Endothelial cell of umbilical vein (primary cell): ENCODE measurements at regions of chr17 and their contacts with region 1.

Region 1: GRCh38 chr17:29640413-29640812 is 17.7 kb upstream of the CORO6 start:
- DNase-seq: peak; percentile 90
- H3K4me3 ChIP-seq: no peak overlapping the region
- H3K27ac ChIP-seq: peak overlapping the region; percentile 79
- H3K4me1 ChIP-seq: peaks cover 58% of the 10 kb centered on the region
- H3K27me3 ChIP-seq: no peaks in the 10 kb centered on the region
- CTCF ChIP-seq: no peak
- POLR2A ChIP-seq: no peak

Region 2: GRCh38 chr17:29533976-29534375 is 106.4 kb before region 1 on chr17:
- CTCF ChIA-PET with region 1: no interaction called
- POLR2A ChIA-PET with region 1: no interaction called
- dilution Hi-C with region 1: no loop called
- intact Hi-C with region 1: no loop called
- DNase-seq: no peak
- H3K4me3 ChIP-seq: no peak overlapping the region
- H3K27ac ChIP-seq: no peak overlapping the region
- H3K4me1 ChIP-seq: no peaks in the 10 kb centered on the region
- H3K27me3 ChIP-seq: no peaks in the 10 kb centered on the region
- CTCF ChIP-seq: no peak
- POLR2A ChIP-seq: no peak

Region 3: DNA sequence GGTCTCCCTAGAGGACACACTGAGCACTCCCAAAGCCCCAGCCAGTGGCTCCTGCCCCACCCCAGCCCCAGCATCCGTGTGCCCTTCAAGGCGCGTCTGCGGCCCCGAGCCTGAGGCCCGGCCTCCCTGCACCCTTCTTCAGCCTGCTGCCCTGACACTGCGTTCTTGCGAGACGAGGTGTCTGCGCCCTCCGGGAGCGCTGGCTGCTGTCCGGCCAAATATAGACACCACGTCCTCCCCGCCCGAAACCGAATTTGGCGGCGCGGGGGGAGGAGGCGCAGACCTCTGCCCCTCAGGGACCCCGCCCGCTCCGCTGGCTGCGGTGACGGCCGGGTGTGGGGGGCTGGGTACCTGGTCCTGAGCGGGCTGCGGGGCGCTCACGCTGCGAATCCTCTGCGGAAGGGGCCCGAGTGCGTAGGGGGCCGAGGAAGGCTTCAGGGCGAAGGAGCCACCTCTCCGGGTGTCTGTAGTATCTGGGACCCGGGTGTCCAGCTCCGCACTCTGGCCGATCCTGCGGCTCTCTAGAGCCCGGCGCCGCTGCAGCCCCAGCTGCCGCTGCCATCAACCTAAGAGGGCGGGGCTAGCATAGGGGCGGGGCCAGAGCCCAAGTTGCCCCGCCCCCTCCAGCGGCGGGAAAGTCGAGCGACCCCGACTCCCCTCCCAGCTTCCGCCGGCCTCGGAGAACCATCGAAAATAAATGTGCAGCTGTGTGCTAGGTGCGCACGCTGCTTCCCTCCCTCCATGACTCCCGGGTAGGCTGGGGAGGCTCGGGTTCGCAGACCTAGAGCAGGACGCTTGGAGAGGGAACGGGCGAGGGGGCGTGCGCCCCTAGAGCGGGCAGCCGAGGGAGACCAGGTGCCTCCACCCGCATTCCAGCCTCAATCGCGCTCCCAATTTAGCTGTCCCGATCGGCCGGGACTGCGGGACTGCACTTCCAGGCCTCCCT is 17.8 kb before region 1 on chr17 and contains the start of gene CORO6:
- CTCF ChIA-PET with region 1: interaction called, 92 read pairs
- POLR2A ChIA-PET with region 1: no interaction called
- dilution Hi-C with region 1: no loop called
- intact Hi-C with region 1: loop called (anchors 1 kb)
- DNase-seq: peak; percentile 50
- H3K4me3 ChIP-seq: peak within 1 kb of the TSS; percentile 31 to 73 (median 71)
- H3K27ac ChIP-seq: no peak within 1 kb of the TSS
- H3K4me1 ChIP-seq: peaks cover 11% of the 10 kb centered on the region
- H3K27me3 ChIP-seq: no peaks in the 10 kb centered on the region
- CTCF ChIP-seq: no peak
- POLR2A ChIP-seq: no peak
- total RNA-seq, gene CORO6: 7.8 and 10.7 TPM in 2 replicates

Region 4: DNA sequence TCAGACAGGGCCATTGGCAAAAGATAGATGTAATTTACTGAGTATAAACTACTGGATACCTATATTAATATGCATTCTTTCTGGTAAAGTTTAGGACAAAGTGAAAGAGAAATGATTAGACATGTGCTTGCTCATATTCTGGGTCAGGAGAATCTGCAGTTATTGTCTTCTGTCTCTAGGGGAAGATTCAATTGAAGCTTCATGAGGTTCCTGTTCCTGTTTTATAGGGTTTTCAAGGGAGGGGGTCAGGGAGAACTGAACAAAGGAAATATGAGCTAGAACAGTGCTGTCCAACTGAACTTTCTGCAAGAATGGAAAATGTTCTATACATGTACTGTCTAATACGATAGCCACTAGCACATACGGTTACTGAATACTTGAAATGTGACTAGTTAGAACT is 41.6 kb after region 1 on chr17:
- CTCF ChIA-PET with region 1: interaction called, 22 read pairs
- POLR2A ChIA-PET with region 1: no interaction called
- dilution Hi-C with region 1: no loop called
- intact Hi-C with region 1: loop called (anchors 1 kb)
- DNase-seq: peak; percentile 41
- H3K4me3 ChIP-seq: no peak overlapping the region
- H3K27ac ChIP-seq: peak overlapping the region; percentile 91
- H3K4me1 ChIP-seq: peaks cover 33% of the 10 kb centered on the region
- H3K27me3 ChIP-seq: no peaks in the 10 kb centered on the region
- CTCF ChIP-seq: no peak
- POLR2A ChIP-seq: no peak

Region 5: DNA sequence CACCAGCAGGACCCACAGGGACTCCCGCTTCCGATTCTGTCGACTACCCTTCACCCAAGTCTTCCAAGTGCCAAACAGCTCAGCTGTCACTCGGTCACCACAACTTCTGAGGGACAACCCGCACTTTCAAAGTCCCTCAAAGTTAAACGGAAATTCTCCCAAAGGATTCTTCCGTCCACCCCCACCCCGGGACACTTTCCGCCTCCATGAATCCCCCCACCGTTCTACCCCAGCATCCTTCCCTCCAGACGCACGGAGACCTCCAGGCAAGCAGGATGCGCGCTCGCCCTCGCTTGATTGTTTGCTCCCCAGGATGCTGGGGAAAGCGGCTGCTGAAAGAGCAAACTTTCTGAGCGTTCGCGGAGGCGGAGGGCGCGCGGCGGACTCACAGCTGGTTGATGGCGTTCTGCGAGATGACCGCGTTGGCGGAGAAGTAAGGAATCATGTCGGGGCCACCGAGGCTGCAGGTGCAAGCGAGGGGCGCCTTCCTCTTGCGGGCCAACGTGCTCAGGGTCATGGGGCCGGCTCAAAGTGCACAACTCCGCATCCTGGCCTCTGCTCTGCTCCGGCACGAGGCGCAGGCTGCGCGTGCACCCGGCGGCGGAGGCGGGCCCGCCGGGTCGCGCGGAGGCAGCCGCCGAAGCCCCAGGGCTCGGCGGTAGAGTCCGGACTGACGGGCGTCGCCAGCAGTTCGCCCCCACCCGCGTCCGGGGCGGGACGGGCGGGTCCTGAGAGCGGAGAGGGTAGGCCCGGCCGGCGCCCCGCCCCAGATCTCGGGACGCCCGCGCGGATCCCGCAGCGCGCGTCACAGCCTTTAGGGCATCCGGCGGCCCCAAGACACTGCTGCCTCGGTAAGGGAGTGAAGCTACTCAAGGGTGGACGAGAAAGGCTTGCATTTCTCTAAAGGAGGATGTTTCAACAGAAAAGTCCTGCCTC is 120.6 kb after region 1 on chr17:
- CTCF ChIA-PET with region 1: interaction called, 27 read pairs
- POLR2A ChIA-PET with region 1: interaction called, 5 read pairs
- dilution Hi-C with region 1: no loop called
- intact Hi-C with region 1: loop called (anchors 1 kb)
- DNase-seq: peak; percentile 89
- H3K4me3 ChIP-seq: peak overlapping the region; percentile 56 to 93 (median 89)
- H3K27ac ChIP-seq: peak overlapping the region; percentile 84
- H3K4me1 ChIP-seq: peaks cover 11% of the 10 kb centered on the region
- H3K27me3 ChIP-seq: no peaks in the 10 kb centered on the region
- CTCF ChIP-seq: no peak
- POLR2A ChIP-seq: peak; percentile 90

Region 6: DNA sequence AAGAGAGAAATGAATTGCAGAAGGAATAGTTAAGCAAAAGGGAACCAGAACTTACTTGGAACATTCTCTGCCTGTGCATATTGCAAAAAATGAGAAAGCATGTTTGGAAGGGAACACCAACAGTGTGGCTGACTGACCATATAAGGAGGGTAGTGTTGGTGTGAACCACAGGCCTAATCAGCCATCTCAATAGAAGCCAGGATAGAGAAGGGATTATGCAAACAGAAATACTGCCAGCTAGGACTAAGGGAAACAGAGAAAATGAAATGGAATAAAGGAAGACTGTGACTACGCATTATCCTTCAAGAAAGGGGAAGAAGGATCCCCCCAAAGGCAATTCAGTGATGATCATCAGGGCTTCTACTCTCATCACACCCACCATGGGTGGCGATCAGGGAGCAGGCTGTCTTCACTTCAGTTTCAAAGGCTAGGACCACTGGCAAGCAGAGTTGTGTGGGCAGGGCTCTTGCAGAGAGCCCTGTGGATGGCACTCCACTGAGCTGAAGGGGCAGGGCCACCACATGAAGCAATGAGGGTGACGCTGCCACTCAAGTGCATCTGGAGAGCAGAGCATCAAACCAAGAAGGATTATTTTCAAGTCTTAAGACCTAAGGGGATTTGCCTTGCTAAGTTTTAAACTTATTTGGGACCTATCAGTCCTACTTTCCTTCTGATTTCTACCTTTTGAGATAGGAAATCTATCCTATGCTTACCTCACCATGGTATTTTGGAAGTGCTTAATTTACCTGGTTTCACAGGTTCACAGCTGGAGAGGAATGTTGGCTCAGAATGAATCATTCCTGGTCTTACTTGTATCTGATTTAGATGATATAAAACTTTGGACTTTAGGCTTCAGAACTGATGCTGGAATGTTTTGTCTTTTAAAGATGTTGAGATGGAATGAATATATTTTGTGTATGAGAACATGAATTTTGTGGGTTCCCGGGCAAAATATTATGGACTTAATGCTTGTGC is 149.1 kb after region 1 on chr17:
- CTCF ChIA-PET with region 1: interaction called, 12 read pairs
- POLR2A ChIA-PET with region 1: no interaction called
- dilution Hi-C with region 1: no loop called
- intact Hi-C with region 1: no loop called
- DNase-seq: no peak
- H3K4me3 ChIP-seq: no peak overlapping the region
- H3K27ac ChIP-seq: no peak overlapping the region
- H3K4me1 ChIP-seq: peaks cover 4% of the 10 kb centered on the region
- H3K27me3 ChIP-seq: no peaks in the 10 kb centered on the region
- CTCF ChIP-seq: no peak
- POLR2A ChIP-seq: no peak

Region 7: DNA sequence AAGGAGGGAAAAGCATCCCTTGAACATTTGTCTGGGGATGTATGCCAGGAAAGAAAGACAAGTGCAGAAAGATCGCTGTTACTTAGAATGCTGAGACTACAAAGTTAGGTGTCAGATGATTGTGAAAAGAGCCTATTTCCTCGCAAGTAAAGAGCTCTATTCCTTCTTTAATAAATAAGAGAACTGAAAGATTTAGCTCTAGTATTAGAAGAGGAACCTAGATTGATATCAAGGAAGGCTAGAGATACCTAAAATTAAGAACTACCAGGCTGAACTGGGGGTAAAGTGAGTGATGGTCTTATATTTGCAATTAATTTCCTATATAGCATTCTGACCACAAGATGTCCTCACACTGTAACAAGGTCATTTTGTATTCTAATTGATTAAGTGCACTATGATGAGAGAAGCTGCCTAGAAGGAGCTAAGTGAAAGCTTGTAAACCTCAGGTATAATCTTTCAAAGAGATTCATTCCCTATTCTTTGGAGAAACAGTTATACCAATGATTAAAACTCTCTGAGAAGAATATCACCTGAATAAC is 227.3 kb after region 1 on chr17:
- CTCF ChIA-PET with region 1: interaction called, 12 read pairs
- POLR2A ChIA-PET with region 1: no interaction called
- dilution Hi-C with region 1: no loop called
- intact Hi-C with region 1: no loop called
- DNase-seq: peak; percentile 40
- H3K4me3 ChIP-seq: no peak overlapping the region
- H3K27ac ChIP-seq: no peak overlapping the region
- H3K4me1 ChIP-seq: no peaks in the 10 kb centered on the region
- H3K27me3 ChIP-seq: no peaks in the 10 kb centered on the region
- CTCF ChIP-seq: no peak
- POLR2A ChIP-seq: no peak

Region 8: GRCh38 chr17:30093463-30094147 is 453.2 kb after region 1 on chr17:
- CTCF ChIA-PET with region 1: interaction called, 52 read pairs
- POLR2A ChIA-PET with region 1: no interaction called
- dilution Hi-C with region 1: no loop called
- intact Hi-C with region 1: no loop called
- DNase-seq: peak; percentile 72
- H3K4me3 ChIP-seq: no peak overlapping the region
- H3K27ac ChIP-seq: no peak overlapping the region
- H3K4me1 ChIP-seq: no peaks in the 10 kb centered on the region
- H3K27me3 ChIP-seq: no peaks in the 10 kb centered on the region
- CTCF ChIP-seq: peak; percentile 52 to 80
- POLR2A ChIP-seq: no peak